HepG2 (cell line): ENCODE measurements at regions of chr17 and their contacts with region 1.

Region 1: GRCh38 chr17:1122533-1123392 is 57.0 kb downstream of the ABR start:
- DNase-seq: peak; percentile 53
- ATAC-seq: peak; percentile 76
- H3K4me3 ChIP-seq: no peak overlapping the region
- H3K27ac ChIP-seq: no peak overlapping the region
- H3K4me1 ChIP-seq: peaks cover 22% of the 10 kb centered on the region
- H3K27me3 ChIP-seq: peaks cover 23 to 66% of the 10 kb centered on the region in 2 experiments; a peak in 4 of 5 replicates
- CTCF ChIP-seq: peak; percentile 96
- EP300 ChIP-seq: no peak
- POLR2A ChIP-seq: no peak
- RAD21 ChIP-seq: peak; percentile 92

Region 2: DNA sequence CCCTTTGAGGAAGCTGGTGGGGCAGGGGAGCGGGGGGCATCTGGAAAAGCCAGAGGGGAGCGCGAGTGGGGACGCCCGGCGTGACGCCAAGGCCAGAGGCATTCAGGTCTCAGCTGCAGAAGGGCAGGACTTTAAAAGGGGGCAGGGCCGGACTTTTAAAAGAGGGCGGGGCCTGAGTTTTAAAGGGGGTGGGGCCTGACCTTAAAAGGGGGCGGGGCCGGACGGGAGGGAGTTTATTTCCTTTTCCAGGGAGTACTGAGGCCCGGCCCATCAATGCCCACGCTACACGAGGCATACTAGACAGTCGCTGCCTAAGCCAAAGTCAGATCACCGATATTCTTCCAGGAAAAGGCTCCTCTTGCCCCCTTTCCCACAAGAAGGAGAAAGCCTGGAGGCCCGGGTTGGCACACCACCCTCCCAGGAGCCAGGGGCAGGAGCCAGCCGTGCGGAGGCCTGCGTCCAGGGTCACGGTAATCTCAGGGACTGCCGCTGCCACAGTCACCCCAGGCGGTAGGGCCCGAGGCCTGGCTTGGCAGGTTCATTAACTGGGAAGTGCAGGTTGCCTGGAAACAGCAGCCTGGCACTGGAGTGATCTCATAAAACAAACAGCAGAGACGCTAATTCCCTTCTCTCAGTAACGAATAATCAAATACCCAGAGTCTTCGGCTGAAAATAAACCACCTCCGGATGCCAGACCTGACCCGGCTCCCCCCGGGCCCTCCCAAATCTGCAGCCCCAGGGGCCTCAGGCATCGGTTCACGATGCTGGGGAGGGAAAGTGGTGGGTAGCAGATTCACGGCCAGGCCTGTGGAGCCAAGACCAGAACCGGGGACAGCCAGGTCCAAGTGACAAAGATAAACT is 35.2 kb before region 1 on chr17:
- CTCF ChIA-PET with region 1: no interaction called
- POLR2A ChIA-PET with region 1: no interaction called
- in situ Hi-C with region 1: no loop called
- intact Hi-C with region 1: no loop called
- DNase-seq: no peak
- ATAC-seq: no peak
- H3K4me3 ChIP-seq: no peak overlapping the region
- H3K27ac ChIP-seq: no peak overlapping the region
- H3K4me1 ChIP-seq: no peaks in the 10 kb centered on the region
- H3K27me3 ChIP-seq: no peaks in the 10 kb centered on the region
- CTCF ChIP-seq: no peak
- EP300 ChIP-seq: no peak
- POLR2A ChIP-seq: no peak
- RAD21 ChIP-seq: no peak

Region 3: DNA sequence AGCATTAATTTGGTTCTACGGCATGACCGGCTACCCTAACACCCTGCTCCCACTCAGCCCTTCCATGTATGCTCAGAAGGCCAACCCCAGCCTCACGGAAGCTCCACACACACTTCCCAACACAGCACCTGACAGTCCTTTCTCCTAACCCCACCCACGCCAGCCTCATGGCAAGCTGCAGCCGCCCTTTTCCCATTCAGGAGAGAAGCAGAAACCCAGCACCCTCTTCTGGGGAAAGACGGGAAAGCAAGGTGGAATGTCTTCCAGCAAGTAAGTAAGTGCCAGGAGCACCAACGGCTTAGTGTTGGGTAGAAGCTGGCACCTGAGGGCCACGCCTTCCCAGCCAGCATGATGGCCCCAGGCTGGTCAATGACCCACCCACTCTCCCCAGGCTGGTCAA is 24.9 kb after region 1 on chr17:
- CTCF ChIA-PET with region 1: interaction called, 19 read pairs
- POLR2A ChIA-PET with region 1: no interaction called
- in situ Hi-C with region 1: no loop called
- intact Hi-C with region 1: loop called (anchors 1 kb)
- DNase-seq: peak; percentile 63
- ATAC-seq: peak; percentile 67
- H3K4me3 ChIP-seq: no peak overlapping the region
- H3K27ac ChIP-seq: no peak overlapping the region
- H3K4me1 ChIP-seq: no peaks in the 10 kb centered on the region
- H3K27me3 ChIP-seq: peaks cover 19 to 63% of the 10 kb centered on the region in 2 experiments
- CTCF ChIP-seq: peak; percentile 78
- EP300 ChIP-seq: no peak
- POLR2A ChIP-seq: no peak
- RAD21 ChIP-seq: peak; percentile 60

Region 4: DNA sequence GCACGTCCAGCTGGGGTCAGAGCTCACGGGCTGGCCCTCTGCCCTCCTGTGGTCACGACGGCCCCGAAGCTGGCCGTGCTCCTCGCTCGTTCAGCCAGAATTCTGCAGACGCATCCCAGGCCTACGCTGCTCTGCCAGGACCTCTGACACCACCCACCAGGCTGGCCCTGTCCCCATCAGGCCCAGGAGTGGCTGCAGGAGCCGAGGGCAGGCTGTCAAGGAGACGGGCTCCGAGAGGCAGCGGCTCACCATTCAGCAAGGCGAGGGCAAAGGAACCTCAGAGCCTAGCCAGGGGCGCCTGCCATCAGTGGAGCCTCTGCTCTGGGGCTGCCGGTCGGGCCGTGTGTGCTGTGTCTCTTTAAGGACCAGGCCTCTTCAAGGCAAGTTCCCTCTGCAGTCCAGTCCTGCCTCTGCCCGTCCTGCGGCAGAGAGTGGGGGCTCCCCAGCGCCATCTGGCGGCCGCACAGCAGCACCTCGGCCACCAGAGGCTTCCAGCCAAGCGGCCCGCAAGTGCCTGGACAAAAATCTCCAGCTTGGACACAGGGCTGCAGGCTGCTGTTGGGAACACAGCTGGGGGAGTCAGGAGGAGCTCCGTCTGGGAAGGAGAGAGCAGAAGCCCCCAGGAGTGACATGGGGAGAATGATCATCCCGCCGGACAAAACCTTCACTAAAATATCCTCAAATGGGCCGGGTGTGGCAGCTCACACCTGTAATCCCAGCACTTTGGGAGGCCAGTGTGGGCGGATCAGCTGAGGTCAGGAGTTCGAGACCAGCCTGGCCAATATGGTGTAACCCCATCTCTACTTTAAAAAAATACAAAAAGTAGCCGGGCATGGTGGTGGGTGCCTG is 64.4 kb after region 1 on chr17:
- CTCF ChIA-PET with region 1: interaction called, 22 read pairs
- POLR2A ChIA-PET with region 1: interaction called, 3 read pairs
- in situ Hi-C with region 1: loop called (anchors 5 kb)
- intact Hi-C with region 1: loop called (anchors 1 kb)
- DNase-seq: peak; percentile 63
- ATAC-seq: peak; percentile 96
- H3K4me3 ChIP-seq: peak overlapping the region in 1 of 3 experiments; percentile 61; a peak in 2 of 6 replicates
- H3K27ac ChIP-seq: no peak overlapping the region
- H3K4me1 ChIP-seq: peaks cover 8% of the 10 kb centered on the region
- H3K27me3 ChIP-seq: peaks cover 10 to 76% of the 10 kb centered on the region in 2 experiments
- CTCF ChIP-seq: peak; percentile 97
- EP300 ChIP-seq: no peak
- POLR2A ChIP-seq: no peak
- RAD21 ChIP-seq: peak; percentile 90